Heart left ventricle (tissue), 16 donors: ENCODE measurements at regions of chr15 and their contacts with region 1.

Region 1: GRCh38 chr15:80494351-80494751 is 90.2 kb downstream of the ARNT2 start:
- DNase-seq: no peak
- ATAC-seq: no peak
- H3K4me3 ChIP-seq: no peak overlapping the region
- H3K27ac ChIP-seq: no peak overlapping the region
- H3K4me1 ChIP-seq: peaks cover 0 to 11% (median 3%) of the 10 kb centered on the region in 12 donors
- H3K27me3 ChIP-seq: no peaks in the 10 kb centered on the region
- CTCF ChIP-seq: no peak
- POLR2A ChIP-seq: no peak

Region 2: GRCh38 chr15:80659375-80659774 is 165.0 kb after region 1 on chr15:
- intact Hi-C with region 1: no loop called
- DNase-seq: no peak
- ATAC-seq: no peak
- H3K4me3 ChIP-seq: no peak overlapping the region
- H3K27ac ChIP-seq: no peak overlapping the region
- H3K4me1 ChIP-seq: no peaks in the 10 kb centered on the region
- H3K27me3 ChIP-seq: peaks cover 0 to 3% (median 0%) of the 10 kb centered on the region in 9 donors
- CTCF ChIP-seq: no peak
- POLR2A ChIP-seq: no peak

Region 3: DNA sequence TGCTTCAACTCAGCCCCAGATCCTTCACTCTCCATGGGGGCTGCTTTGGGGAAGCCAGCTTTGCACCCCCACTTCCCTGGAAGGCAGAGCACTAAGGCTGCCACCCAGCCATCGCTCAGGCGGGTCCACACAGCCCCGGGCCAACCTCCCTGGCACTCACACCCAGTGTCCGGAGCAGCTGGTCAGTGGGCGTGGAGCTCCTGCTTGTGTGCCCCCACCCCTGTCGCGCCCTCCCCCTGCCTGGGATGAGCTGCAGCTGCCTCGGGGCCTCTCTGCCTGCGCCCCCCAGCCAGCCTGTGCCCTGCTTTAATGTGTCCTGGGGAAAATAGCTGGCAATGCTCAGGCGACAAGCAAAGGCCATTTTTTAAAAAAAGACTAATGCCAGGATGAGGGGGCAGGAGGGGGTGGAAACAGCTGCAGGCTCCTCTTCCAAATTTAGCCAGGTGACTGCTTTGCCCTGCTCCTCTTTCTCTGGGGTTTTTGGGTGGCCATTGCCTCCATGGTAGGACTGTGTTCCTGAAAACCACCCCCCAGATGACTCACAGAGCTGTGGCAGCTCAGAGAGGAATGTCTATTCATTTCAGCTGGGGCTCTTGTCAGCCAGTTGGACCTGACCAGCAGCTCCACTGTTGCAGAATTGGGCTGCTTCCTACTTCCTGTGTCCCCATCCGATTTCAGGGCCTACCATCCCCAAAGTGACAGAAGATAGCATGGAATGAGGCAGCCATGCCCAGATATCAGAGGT is 349.8 kb after region 1 on chr15:
- intact Hi-C with region 1: loop called in 1 of 10 experiments (anchors 5 kb)
- DNase-seq: no peak
- ATAC-seq: no peak
- H3K4me3 ChIP-seq: no peak overlapping the region
- H3K27ac ChIP-seq: no peak overlapping the region
- H3K4me1 ChIP-seq: no peaks in the 10 kb centered on the region
- H3K27me3 ChIP-seq: peaks cover 0 to 5% (median 0%) of the 10 kb centered on the region in 9 donors
- CTCF ChIP-seq: no peak
- POLR2A ChIP-seq: no peak